ENCODE measurements at regions of chr4 and their contacts with region 1.

Region 1: GRCh38 chr4:10403633-10404445 is 53.4 kb downstream of the ZNF518B start:
- DNase-seq: peak in 1 of 3 donors; percentile 73
- ATAC-seq: peak; percentile 51
- H3K4me3 ChIP-seq: no peak overlapping the region
- H3K4me1 ChIP-seq: no peaks in the 10 kb centered on the region
- CTCF ChIP-seq: no peak

Region 2: GRCh38 chr4:10157478-10158332 is 246.1 kb before region 1 on chr4:
- intact Hi-C with region 1: loop called (anchors 2 to 5 kb)
- DNase-seq: peak in 2 of 3 donors; percentile 42 to 61
- ATAC-seq: peak; percentile 78
- H3K4me3 ChIP-seq: no peak overlapping the region
- H3K4me1 ChIP-seq: peaks cover 11% of the 10 kb centered on the region
- CTCF ChIP-seq: peak; percentile 67

Region 3: DNA sequence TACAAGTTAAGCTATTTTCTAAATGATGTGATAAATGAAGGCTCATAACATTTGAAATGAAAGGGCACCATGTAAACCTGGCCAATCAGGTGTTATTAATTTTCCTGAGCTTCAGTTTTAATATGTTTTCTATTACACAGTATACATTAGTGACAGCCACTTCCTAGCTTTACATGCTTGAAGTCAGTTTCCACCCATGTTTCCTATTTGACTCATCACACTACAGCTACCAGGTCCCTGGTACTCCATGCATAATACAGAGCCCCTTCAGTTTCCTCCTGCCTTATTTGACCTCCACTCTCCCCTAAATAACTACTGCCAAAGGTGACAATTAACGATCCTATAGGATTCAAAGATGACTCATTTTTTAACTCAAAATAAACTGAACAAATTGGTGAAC is 35.1 kb after region 1 on chr4:
- intact Hi-C with region 1: no loop called
- DNase-seq: no peak
- ATAC-seq: no peak
- H3K4me3 ChIP-seq: no peak overlapping the region
- H3K4me1 ChIP-seq: no peaks in the 10 kb centered on the region
- CTCF ChIP-seq: no peak

Measured in mucosa of descending colon (tissue), 3 donors.